ENCODE measurements at regions of chr20 and their contacts with region 1.

Region 1: GRCh38 chr20:51720856-51721255 is 47.3 kb downstream of the ATP9A start:
- DNase-seq: peak; percentile 70
- ATAC-seq: peak; percentile 85
- H3K4me3 Mint-ChIP-seq: no peak overlapping the region
- H3K27ac Mint-ChIP-seq: peak overlapping the region; percentile 17
- H3K4me1 Mint-ChIP-seq: peaks cover 13% of the 10 kb centered on the region
- H3K27me3 Mint-ChIP-seq: peaks cover 8% of the 10 kb centered on the region

Region 2: GRCh38 chr20:51661609-51662178 is 59.2 kb before region 1 on chr20:
- CTCF ChIA-PET with region 1: no interaction called
- POLR2A ChIA-PET with region 1: no interaction called
- intact Hi-C with region 1: loop called in 1 of 2 experiments (anchors 2 kb)
- DNase-seq: peak; percentile 65
- ATAC-seq: peak; percentile 91
- H3K4me3 Mint-ChIP-seq: no peak overlapping the region
- H3K27ac Mint-ChIP-seq: no peak overlapping the region
- H3K4me1 Mint-ChIP-seq: peaks cover 19% of the 10 kb centered on the region
- H3K27me3 Mint-ChIP-seq: peaks cover 7% of the 10 kb centered on the region

Region 3: DNA sequence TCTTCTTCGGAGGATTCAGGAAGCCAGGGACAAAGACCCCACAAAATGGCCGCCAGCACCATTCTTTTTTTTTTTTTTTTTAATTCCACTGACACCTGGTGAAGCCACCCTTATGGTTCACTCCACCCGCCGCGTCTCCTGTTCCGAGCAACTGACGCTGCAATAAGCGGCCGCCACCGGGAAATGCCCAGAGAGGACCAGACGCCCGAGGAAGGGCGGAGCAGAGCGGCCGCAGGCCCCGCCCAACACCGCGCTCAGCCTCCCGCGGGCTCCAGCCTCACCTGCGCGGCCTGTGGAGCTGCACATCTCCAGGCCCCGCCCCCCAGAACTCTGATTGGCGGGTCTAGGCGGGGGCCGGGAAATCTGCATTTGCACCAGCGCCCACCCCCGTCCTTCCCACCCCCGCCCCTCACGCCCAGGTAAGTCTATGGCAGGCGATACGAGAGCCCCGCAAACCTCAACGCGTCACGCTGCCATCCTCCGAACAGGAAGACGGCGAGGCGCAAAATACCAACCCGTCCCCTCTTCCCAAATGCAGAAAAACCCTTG is 46.2 kb after region 1 on chr20:
- CTCF ChIA-PET with region 1: no interaction called
- POLR2A ChIA-PET with region 1: no interaction called
- intact Hi-C with region 1: loop called in 1 of 2 experiments (anchors 5 kb)
- DNase-seq: peak; percentile 77
- ATAC-seq: peak; percentile 97
- H3K4me3 Mint-ChIP-seq: peak overlapping the region; percentile 46
- H3K27ac Mint-ChIP-seq: no peak overlapping the region
- H3K4me1 Mint-ChIP-seq: peaks cover 8% of the 10 kb centered on the region
- H3K27me3 Mint-ChIP-seq: peaks cover 29% of the 10 kb centered on the region